ENCODE measurements at regions of chr17 and their contacts with region 1.

Region 1: DNA sequence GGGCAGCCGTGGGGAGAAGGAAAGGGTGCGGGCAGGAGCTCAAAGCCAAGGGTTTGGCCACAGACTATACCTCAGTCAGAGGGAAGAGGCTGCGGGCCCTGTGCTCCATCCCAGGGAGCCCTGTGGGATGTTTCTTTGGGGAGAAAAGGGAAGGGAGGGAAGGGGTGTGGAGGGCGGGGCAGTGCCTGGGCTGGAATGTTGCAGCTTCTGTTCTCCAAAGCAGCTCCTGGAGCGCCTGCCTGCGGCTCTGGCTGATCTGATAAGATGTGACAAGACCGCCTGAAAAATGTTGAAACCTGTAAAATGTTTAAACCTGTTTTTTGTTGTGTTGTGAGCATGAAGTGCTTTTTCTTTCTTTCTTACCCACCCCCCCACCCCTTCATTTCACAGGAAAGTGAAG is 32.8 kb downstream of the WNT3 start:
- DNase-seq: peak; percentile 76 to 86
- H3K4me3 ChIP-seq: no peak overlapping the region
- H3K4me3 Mint-ChIP-seq: peak overlapping the region; percentile 10
- H3K27ac Mint-ChIP-seq: peak overlapping the region; percentile 11
- H3K4me1 ChIP-seq: peaks cover 15% of the 10 kb centered on the region
- H3K4me1 Mint-ChIP-seq: peaks cover 7% of the 10 kb centered on the region
- H3K27me3 ChIP-seq: no peaks in the 10 kb centered on the region
- H3K27me3 Mint-ChIP-seq: no peaks in the 10 kb centered on the region
- CTCF ChIP-seq: peak in 1 of 2 experiments; percentile 7

Region 2: GRCh38 chr17:46836500-46836899 is 50.8 kb after region 1 on chr17:
- CTCF ChIA-PET with region 1: interaction called, 10 read pairs
- POLR2A ChIA-PET with region 1: no interaction called
- intact Hi-C with region 1: no loop called
- DNase-seq: no peak
- H3K4me3 ChIP-seq: no peak overlapping the region
- H3K4me3 Mint-ChIP-seq: no peak overlapping the region
- H3K27ac Mint-ChIP-seq: no peak overlapping the region
- H3K4me1 ChIP-seq: 0 out of 2 replicates have a peak, but pooled peaks cover 3% of the 10 kb centered on the region
- H3K4me1 Mint-ChIP-seq: peaks cover 8% of the 10 kb centered on the region
- H3K27me3 ChIP-seq: no peaks in the 10 kb centered on the region
- H3K27me3 Mint-ChIP-seq: no peaks in the 10 kb centered on the region
- CTCF ChIP-seq: no peak

Region 3: DNA sequence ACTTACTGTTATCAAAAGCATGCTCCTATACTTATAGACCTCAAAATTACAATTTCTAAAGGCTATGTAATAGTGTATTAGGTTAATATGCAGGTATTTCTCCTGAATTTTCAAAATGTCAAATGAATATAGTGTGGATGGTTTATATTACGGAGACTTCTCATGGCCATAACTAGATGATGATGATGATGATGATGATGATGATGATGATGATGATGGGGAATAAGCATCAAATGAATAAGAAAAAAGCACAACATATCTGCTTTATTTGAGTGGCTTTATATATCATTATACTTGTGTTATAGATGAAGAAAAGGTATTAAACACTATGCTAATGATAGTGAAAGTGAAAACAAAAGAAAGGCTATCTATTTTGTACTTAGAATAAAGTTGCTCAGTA is 349.5 kb after region 1 on chr17:
- CTCF ChIA-PET with region 1: no interaction called
- POLR2A ChIA-PET with region 1: no interaction called
- intact Hi-C with region 1: no loop called
- DNase-seq: no peak
- H3K4me3 ChIP-seq: no peak overlapping the region
- H3K4me3 Mint-ChIP-seq: no peak overlapping the region
- H3K27ac Mint-ChIP-seq: no peak overlapping the region
- H3K4me1 ChIP-seq: no peaks in the 10 kb centered on the region
- H3K4me1 Mint-ChIP-seq: no peaks in the 10 kb centered on the region
- H3K27me3 ChIP-seq: no peaks in the 10 kb centered on the region
- H3K27me3 Mint-ChIP-seq: no peaks in the 10 kb centered on the region
- CTCF ChIP-seq: no peak